CD4-positive, alpha-beta memory T cell (primary cell): ENCODE measurements at regions of chr7 and their contacts with region 1.

Region 1: GRCh38 chr7:138865843-138866242 is 67.8 kb upstream of the ATP6V0A4 start:
- DNase-seq: peak; percentile 36 to 56 (median 42)
- H3K4me3 ChIP-seq: no peak overlapping the region
- H3K4me3 Mint-ChIP-seq: no peak overlapping the region
- H3K27ac ChIP-seq: no peak overlapping the region
- H3K27ac Mint-ChIP-seq: peak overlapping the region in 3 of 7 donors; percentile 40 to 81 (median 55)
- H3K4me1 ChIP-seq: no peaks in the 10 kb centered on the region
- H3K4me1 Mint-ChIP-seq: peaks cover 0 to 5% (median 3%) of the 10 kb centered on the region in 4 donors
- H3K27me3 ChIP-seq: no peaks in the 10 kb centered on the region
- H3K27me3 Mint-ChIP-seq: peaks cover 0 to 4% of the 10 kb centered on the region in 2 donors

Region 2: GRCh38 chr7:138449580-138449979 is 416.3 kb before region 1 on chr7:
- CTCF ChIA-PET with region 1: no interaction called
- POLR2A ChIA-PET with region 1: no interaction called
- intact Hi-C with region 1: loop called (anchors 1 kb)
- DNase-seq: peak in 4 of 5 donors; percentile 12 to 30 (median 18)
- H3K4me3 ChIP-seq: no peak overlapping the region
- H3K4me3 Mint-ChIP-seq: no peak overlapping the region
- H3K27ac ChIP-seq: no peak overlapping the region
- H3K27ac Mint-ChIP-seq: peak overlapping the region in 1 of 7 donors; percentile 35
- H3K4me1 ChIP-seq: no peaks in the 10 kb centered on the region
- H3K4me1 Mint-ChIP-seq: no peaks in the 10 kb centered on the region
- H3K27me3 ChIP-seq: no peaks in the 10 kb centered on the region
- H3K27me3 Mint-ChIP-seq: peaks cover 0 to 4% of the 10 kb centered on the region in 2 donors

Region 3: DNA sequence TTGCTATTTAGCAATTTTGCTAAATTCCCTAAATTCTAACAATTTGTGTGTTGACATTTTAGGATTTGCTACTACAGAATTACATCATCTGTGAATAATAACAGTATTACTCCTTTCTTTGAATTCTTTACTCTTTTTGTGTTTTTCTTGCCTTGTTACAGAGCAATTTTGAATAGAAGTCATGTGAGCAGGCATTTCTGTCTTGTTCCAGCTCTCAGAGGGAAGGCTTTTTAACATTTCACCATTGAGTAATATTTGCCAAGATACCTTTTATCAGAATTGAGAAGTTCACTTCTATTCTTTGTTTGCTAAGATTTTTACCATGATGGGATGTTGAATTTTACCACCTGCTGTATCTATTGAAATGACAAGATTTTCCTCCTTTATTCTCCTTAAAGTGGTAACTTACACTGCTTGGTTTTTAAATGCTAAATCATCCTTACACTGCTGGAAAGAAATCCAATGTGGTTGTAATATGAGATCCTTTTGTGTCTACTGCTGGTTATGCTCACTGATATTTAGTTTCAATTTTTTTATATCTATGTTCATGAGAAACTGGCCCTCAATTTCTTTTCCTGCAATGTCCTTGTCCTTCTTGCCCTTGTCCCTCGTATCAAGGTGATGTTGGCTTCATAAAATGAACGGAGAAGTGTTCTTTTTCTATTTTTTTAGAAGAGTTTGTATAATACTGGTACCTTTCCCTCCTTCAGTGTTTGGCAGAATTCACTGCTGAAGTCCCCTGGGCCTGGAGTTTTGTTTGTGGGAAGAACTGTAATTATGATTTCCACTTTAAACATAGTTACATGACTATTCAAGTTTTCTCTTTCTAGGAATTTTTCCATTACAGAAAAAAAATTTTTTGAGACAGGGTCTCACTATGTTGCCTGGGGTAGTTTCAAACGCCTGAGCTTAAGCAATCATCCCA is 17.5 kb before region 1 on chr7:
- CTCF ChIA-PET with region 1: no interaction called
- POLR2A ChIA-PET with region 1: no interaction called
- intact Hi-C with region 1: no loop called
- DNase-seq: no peak
- H3K4me3 ChIP-seq: no peak overlapping the region
- H3K4me3 Mint-ChIP-seq: no peak overlapping the region
- H3K27ac ChIP-seq: no peak overlapping the region
- H3K27ac Mint-ChIP-seq: no peak overlapping the region
- H3K4me1 ChIP-seq: no peaks in the 10 kb centered on the region
- H3K4me1 Mint-ChIP-seq: no peaks in the 10 kb centered on the region
- H3K27me3 ChIP-seq: no peaks in the 10 kb centered on the region
- H3K27me3 Mint-ChIP-seq: peaks cover 2 to 3% of the 10 kb centered on the region in 2 donors